Aorta (tissue), 5 donors: ENCODE measurements at regions of chr1 and their contacts with region 1.

Region 1: DNA sequence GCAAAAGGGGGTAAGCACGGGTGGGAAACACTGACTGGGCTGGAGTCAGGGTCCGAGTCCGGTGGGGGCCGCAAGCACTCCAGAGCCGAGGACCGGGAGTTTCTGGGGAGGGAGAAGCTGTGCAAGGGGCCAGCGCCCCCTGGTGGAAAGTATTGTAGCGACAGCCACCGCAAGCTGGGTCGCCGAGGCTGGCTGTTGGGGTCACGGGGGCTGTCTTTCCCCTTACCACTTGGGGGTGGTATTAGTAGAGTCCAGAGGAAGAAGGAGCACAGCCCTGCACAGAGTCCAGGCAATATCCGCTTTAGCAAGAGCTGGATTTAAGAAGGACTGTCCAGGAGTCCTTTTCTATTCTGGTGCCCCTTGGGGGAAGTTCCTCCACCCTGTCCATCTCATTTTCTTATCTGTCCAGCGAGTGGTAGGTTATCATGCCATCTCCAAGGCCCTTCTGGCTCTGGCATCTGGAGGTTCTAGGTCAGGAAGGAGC is 17.9 kb upstream of the ETV3 start:
- DNase-seq: peak; percentile 79 to 94
- ATAC-seq: peak; percentile 91
- H3K4me3 ChIP-seq: no peak overlapping the region
- H3K27ac ChIP-seq: no peak overlapping the region
- H3K4me1 ChIP-seq: no peaks in the 10 kb centered on the region
- H3K27me3 ChIP-seq: no peaks in the 10 kb centered on the region

Region 2: GRCh38 chr1:157090196-157090647 is 65.9 kb before region 1 on chr1:
- intact Hi-C with region 1: loop called (anchors 1 to 2 kb)
- DNase-seq: peak; percentile 90 to 96
- ATAC-seq: peak; percentile 89
- H3K4me3 ChIP-seq: no peak overlapping the region
- H3K27ac ChIP-seq: no peak overlapping the region
- H3K4me1 ChIP-seq: no peaks in the 10 kb centered on the region
- H3K27me3 ChIP-seq: no peaks in the 10 kb centered on the region

Region 3: DNA sequence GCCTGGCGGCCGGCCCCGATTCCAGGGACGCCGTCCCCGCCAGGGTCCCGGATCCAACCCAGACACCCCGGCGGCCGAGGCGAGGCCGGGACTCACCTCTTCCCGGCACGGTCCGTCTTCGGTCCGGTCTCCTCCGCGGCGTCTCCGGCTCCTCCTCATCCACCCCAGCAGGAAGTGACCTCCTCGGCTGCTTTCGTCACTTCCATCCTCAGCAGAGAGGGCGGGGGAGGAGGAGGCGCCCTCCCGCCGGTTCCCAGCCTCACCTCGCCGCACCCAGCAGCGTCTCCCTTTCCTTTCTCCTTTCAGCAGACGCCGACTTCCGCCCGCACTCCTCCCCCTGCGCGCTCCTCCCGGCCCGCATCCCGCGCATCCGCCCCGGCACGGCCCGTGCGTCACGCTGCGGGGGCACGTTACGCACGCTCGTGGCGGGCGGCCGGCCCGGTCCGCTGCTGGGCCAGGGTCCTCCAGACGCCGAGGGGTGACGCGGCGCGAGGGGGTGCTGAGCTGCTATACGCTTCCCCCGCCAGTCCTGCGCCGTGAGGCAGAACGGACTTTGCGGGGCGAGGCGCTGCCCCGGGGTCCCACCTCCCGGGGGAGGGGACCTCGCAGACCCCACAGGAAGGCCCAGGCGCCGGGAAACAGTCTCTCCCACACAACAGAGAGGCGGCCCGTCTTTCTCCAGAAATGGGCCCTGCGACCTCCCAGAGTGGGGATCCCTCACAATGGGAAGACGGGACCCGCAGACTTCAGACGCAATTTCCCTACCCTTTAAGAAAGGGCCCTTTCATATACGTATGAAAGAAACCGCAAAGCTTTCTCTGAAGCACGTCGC is 17.7 kb before region 1 on chr1 and contains the start of gene ETV3:
- intact Hi-C with region 1: no loop called
- DNase-seq: peak; percentile 93 to 95
- ATAC-seq: peak; percentile 94
- H3K4me3 ChIP-seq: peak within 1 kb of the TSS; percentile 87 to 94
- H3K27ac ChIP-seq: peak within 1 kb of the TSS; percentile 47 to 95
- H3K4me1 ChIP-seq: no peaks in the 10 kb centered on the region
- H3K27me3 ChIP-seq: no peaks in the 10 kb centered on the region
- total RNA-seq, gene ETV3: 29.1 to 33.6 TPM